Right ventricle myocardium superior (tissue), 1 donor: ENCODE measurements at regions of chr19 and their contacts with region 1.

Region 1: DNA sequence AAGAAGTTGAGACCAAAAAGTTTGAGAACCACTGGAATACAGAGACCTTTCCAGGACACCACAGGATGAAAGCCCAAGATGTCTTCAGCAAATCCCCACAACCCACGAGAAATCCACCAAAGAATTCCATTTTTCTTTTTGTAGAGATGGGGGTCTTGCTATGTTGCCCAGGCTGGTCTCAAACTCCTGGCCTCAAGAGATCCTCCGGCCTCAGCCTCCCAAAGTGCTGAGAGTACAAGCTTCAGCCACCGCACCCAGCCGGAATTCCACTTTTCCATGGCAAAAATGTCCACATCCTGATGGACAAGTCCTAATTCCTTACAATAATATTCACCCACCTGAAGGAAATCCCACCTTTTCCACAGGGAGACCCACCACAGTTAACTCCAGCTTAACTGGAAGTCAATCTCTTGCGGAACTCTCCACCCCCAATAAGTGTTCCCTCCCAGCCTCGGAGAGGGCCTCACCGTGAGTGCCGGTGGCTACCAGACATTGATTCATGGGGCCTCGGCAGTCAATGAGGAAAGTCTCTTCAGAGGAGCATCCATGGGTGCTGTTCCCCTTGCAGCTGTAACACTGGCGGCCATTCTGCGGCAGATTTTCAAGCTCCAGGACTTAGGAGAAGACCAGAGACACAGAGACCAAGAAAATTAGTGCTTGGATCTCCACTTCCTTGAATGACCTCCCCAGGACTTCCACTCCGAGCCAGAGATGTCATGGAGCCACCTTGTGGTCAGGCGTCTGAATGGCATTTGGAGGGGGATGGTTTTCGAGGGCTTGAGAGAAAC is 12.3 kb upstream of the CADM4 start:
- DNase-seq: peak; percentile 69
- ATAC-seq: peak; percentile 80

Region 2: GRCh38 chr19:43446746-43447489 is 205.0 kb before region 1 on chr19:
- intact Hi-C with region 1: loop called (anchors 10 kb)
- DNase-seq: peak; percentile 85
- ATAC-seq: peak; percentile 93

Region 3: GRCh38 chr19:43534816-43535761 is 116.9 kb before region 1 on chr19:
- intact Hi-C with region 1: loop called (anchors 5 kb)
- DNase-seq: peak; percentile 82
- ATAC-seq: peak; percentile 5

Region 4: GRCh38 chr19:43606569-43607229 is 45.3 kb before region 1 on chr19:
- intact Hi-C with region 1: no loop called
- DNase-seq: no peak
- ATAC-seq: no peak

Region 5: GRCh38 chr19:43624933-43625332 is 27.0 kb before region 1 on chr19:
- intact Hi-C with region 1: no loop called
- DNase-seq: peak; percentile 75
- ATAC-seq: no peak

Region 6: DNA sequence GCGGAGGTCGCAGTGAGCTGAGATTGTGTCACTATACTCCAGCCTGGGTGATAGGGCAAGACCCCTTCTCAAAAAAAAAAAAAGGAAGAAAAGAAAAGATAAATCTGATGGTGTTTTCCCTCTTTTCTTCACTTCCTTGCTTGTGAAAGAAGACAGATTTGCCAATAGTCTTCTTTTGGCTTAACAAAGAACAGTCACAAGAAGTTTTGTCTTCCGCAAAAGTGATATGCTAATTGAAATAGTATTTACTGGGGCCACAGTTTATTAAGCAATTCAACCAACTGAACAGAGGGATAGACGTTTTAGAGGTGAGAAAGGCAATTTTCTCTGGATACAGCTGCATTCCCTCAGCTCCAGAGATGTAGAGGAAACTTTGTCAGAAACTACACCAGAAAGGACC is 40.9 kb after region 1 on chr19:
- intact Hi-C with region 1: no loop called
- DNase-seq: no peak
- ATAC-seq: no peak